Activated CD8-positive, alpha-beta T cell treated with anti-CD3 and anti-CD28 coated beads for 36 hours (primary cell): ENCODE measurements at regions of chr10 and their contacts with region 1.

Region 1: DNA sequence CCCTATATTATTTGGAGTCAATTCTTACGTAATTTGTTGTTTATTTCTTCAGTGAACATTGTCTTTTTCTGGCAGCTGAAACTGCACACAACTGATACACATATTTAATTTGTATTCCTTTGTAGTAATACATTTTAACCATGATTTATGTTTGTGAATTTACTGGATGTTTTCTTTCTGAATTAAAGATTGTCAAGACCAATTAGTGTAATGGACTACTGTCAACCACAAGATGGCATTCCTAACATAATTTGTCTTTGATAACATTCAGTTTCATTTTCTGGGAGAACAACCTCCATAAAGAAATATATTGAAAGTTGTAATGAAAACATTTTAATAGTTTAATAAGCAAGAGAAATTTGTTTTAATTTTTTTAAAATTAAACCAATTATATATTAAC is 10.1 kb downstream of the THNSL1 start:
- DNase-seq: no peak
- ATAC-seq: no peak
- H3K4me3 Mint-ChIP-seq: no peak overlapping the region
- H3K27ac Mint-ChIP-seq: no peak overlapping the region
- H3K4me1 Mint-ChIP-seq: peaks cover 3% of the 10 kb centered on the region
- H3K27me3 Mint-ChIP-seq: no peaks in the 10 kb centered on the region
- CTCF ChIP-seq: no peak

Region 2: DNA sequence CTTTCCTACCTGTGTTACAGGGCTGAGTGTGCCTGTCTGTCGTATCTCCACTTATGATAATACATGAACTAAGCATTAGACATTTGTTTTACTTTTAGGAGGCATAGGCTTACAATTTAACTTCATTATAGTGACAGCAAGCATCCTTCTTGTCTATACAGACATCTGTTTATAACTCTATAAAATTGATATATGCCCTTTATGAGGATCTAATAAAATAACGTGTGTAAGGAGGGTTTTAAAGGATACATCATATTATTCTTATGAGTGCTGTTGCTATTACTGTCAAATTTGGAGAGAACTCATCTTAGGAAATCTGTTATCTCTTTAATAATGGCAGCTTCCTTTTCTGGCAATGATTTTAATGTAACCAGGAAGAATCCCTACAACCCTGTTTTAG is 11.9 kb after region 1 on chr10:
- CTCF ChIA-PET with region 1: no interaction called
- POLR2A ChIA-PET with region 1: no interaction called
- intact Hi-C with region 1: no loop called
- DNase-seq: no peak
- ATAC-seq: no peak
- H3K4me3 Mint-ChIP-seq: no peak overlapping the region
- H3K27ac Mint-ChIP-seq: no peak overlapping the region
- H3K4me1 Mint-ChIP-seq: no peaks in the 10 kb centered on the region
- H3K27me3 Mint-ChIP-seq: peaks cover 18% of the 10 kb centered on the region
- CTCF ChIP-seq: no peak

Region 3: GRCh38 chr10:25080880-25081581 is 54.6 kb after region 1 on chr10:
- CTCF ChIA-PET with region 1: interaction called, 16 read pairs
- POLR2A ChIA-PET with region 1: no interaction called
- intact Hi-C with region 1: no loop called
- DNase-seq: peak; percentile 76
- ATAC-seq: peak; percentile 70
- H3K4me3 Mint-ChIP-seq: no peak overlapping the region
- H3K27ac Mint-ChIP-seq: no peak overlapping the region
- H3K4me1 Mint-ChIP-seq: peaks cover 5% of the 10 kb centered on the region
- H3K27me3 Mint-ChIP-seq: peaks cover 6% of the 10 kb centered on the region
- CTCF ChIP-seq: peak; percentile 88

Region 4: GRCh38 chr10:25169740-25170139 is 143.3 kb after region 1 on chr10:
- CTCF ChIA-PET with region 1: no interaction called
- POLR2A ChIA-PET with region 1: no interaction called
- intact Hi-C with region 1: no loop called
- DNase-seq: no peak
- ATAC-seq: no peak
- H3K4me3 Mint-ChIP-seq: no peak overlapping the region
- H3K27ac Mint-ChIP-seq: no peak overlapping the region
- H3K4me1 Mint-ChIP-seq: peaks cover 5% of the 10 kb centered on the region
- H3K27me3 Mint-ChIP-seq: peaks cover 42% of the 10 kb centered on the region
- CTCF ChIP-seq: no peak